ENCODE measurements at regions of chr1 and their contacts with region 1.

Region 1: GRCh38 chr1:36516372-36517325 is 33.9 kb upstream of the CSF3R start:
- DNase-seq: no peak
- H3K4me3 ChIP-seq: no peak overlapping the region
- CTCF ChIP-seq: peak; percentile 82

Region 2: DNA sequence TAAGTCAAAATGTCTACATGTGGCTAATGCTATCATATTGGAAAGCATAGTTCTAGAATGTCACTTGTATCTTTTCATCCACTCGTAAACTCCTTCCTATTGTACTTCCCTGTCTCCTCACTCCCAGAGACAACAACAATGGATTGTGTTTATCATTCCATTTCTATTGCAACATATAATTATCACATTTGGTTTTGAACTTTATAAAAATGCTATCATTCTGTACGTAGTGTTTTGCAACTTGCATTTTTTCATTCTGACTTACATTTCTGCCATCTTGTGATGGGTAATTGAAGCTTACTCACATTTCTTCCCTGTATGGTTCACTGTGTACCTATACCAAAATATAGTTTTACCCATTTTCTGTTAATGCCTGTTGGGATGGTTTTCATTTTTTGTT is 19.4 kb before region 1 on chr1:
- CTCF ChIA-PET with region 1: interaction called, 27 read pairs
- POLR2A ChIA-PET with region 1: no interaction called
- DNase-seq: no peak
- H3K4me3 ChIP-seq: no peak overlapping the region
- CTCF ChIP-seq: no peak

Region 3: DNA sequence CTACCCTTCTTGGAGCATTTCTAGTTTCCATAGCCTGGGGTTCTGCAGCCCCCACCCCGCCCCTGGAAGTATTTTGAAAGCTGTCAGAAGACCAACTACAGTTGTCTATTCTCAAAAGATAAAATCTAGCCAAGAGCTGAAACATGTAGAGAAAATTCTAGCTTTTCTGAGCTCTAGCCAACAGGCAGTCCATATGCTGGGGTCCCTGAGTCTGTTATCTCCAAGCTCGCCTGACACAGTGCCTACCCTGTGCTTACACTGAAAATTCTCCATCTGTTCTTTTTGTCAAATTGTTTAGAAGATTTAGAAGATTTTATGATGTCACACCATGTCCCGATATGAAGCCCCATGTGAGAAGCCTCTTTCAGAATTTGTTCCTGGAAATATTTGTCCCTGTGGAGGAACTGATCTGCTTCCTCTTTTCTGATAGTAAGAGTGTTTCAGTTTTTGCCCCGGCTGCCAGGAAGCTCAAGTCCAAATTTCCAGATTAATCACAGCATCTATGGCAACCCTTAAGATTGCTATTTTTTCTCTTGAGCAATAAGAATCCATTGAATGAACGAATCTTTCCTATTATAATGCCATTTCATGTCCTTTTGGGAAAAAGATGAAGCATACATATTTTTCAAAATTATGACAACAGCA is 10.3 kb before region 1 on chr1:
- CTCF ChIA-PET with region 1: interaction called, 37 read pairs
- POLR2A ChIA-PET with region 1: no interaction called
- DNase-seq: no peak
- H3K4me3 ChIP-seq: no peak overlapping the region
- CTCF ChIP-seq: no peak

Region 4: DNA sequence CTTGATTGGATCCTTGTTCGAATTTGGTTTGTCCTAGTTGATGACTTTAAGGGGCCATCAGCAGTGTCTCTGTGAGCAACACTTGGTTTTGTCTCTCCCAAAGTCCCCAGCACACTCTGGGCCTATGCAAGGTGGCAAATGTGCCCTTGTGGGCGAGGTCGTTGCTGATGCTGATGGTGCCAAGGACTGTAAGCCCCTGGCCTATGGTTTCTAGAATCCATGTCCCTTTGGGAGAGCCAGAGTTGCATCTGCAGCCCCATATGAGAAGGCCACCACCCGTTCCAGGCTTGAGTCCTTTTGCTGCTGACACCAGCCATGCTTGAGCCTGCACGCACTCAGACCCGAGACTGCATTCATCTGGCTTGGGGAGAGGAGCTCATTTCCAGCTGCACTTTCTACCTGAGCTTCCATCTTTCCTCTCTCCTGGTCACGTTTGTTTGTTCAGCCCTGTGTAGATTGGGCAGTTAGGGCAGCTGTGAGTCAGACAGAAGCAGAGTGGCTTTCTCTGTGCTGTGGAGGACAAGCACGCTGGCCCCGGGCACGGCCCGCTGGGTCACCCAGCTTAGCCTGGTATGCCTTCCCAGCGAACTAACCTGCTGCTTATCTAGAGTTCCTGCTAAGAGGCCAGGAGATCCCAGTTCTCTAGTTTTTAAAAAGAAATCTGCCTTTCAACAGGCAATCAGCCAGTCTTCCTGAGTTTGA is 18.2 kb after region 1 on chr1:
- CTCF ChIA-PET with region 1: interaction called, 15 read pairs
- POLR2A ChIA-PET with region 1: no interaction called
- DNase-seq: no peak
- H3K4me3 ChIP-seq: no peak overlapping the region
- CTCF ChIP-seq: no peak

Region 5: GRCh38 chr1:37434292-37434907 is 917.8 kb after region 1 on chr1:
- CTCF ChIA-PET with region 1: interaction called, 61 read pairs
- POLR2A ChIA-PET with region 1: no interaction called
- DNase-seq: no peak
- H3K4me3 ChIP-seq: no peak overlapping the region
- CTCF ChIP-seq: peak; percentile 97

Region 6: DNA sequence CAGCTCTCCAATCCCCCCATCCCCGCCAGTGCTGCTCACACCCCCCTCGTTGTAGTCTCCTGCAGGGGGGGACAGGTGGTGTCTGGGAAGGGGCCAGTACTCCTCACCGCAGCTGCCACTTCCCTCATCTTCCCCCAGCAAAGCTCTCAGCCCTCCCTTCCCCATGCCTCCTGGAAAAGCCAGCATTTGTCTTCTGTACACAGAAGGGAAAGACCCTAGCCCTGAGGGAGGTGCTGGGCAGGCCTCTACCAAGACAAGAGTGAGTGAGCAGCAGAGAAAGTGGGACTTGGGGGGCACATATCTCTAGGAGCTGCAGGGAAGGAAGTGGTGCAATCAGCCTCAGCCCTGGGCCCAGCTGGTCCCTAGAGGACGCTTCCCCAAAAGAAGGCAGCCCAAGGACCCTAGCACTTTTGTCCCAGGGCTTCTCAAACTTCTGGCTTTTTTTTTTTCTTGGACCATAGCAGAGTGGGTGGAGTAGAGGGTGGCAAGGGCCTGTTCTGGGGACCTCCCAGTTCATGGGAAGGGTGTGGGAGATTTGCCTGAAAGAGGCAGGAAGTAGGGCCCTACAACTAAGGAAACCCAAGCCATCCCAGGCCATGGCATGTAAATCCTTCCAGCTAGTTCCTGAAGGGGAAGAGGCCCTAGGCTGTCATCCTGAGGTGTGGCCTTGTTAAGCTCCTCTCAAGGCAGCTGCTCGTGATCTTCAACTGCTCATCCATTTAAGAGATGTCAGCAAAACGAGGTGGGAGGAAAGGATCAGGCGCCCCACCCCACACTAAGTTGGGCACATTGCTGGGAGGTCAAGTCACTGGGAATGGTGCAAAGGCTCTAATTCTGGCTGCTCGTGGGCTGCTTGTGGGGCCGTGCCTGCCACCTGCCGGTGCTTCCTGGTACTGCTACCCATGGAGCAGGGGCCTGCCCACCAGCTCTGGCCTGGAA is 970.3 kb after region 1 on chr1:
- CTCF ChIA-PET with region 1: interaction called, 18 read pairs
- POLR2A ChIA-PET with region 1: no interaction called
- DNase-seq: no peak
- H3K4me3 ChIP-seq: no peak overlapping the region
- CTCF ChIP-seq: peak; percentile 98

Measured in AG04449 (cell line).